Right cardiac atrium (tissue), 5 donors: ENCODE measurements at regions of chr21 and their contacts with region 1.

Region 1: DNA sequence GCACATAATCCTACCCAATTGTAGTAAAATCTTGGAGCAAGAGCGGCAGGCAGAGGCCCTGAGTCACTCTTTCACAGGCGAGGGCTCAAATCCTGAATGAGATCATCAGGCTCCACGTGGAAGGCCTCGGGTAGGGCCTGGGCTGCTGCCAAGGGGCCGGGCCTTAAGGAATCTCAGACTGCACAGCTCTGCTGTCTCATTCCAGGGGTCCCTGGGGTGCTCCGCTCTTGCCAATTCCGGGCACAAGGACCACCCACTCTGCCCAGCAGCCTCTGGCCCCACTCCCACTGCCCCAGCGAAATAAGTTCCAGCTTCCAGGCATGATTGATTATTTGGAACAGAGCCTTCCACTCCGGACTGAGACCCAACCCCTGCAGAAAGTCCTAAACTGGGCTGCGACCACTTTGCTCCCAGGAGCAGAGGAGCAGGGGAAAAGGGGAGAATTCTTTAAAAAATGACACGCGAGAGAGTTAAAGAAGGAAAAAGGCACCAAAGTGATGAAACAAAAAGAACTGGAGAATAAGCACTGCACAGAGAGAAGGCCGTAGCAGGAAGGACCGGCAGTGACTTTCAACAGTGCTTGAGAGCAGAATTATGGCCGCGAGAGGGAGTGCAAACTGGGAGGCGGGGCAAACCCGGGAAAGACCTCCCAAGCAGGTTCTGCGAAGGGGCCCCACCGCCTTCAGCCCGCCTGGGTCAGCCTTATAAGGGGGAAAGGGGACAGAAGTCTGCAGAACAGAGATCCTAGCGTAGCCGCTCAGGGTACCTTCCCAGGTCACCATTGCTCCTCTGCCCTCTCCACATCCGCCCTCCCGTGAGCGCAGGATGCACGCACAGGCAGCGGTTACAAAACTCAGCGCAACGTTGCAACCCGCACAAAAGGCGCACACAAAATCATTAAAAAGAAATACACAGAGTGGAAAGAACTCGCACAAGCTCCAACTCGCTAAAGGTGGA is 2.0 kb downstream of the ADAMTS1 start:
- DNase-seq: peak; percentile 94 to 98 (median 97)
- ATAC-seq: peak; percentile 50 to 67
- H3K4me3 ChIP-seq: peak overlapping the region; percentile 77
- H3K27ac ChIP-seq: peak overlapping the region; percentile 95
- H3K4me1 ChIP-seq: peaks cover 6% of the 10 kb centered on the region
- H3K27me3 ChIP-seq: no peaks in the 10 kb centered on the region

Region 2: DNA sequence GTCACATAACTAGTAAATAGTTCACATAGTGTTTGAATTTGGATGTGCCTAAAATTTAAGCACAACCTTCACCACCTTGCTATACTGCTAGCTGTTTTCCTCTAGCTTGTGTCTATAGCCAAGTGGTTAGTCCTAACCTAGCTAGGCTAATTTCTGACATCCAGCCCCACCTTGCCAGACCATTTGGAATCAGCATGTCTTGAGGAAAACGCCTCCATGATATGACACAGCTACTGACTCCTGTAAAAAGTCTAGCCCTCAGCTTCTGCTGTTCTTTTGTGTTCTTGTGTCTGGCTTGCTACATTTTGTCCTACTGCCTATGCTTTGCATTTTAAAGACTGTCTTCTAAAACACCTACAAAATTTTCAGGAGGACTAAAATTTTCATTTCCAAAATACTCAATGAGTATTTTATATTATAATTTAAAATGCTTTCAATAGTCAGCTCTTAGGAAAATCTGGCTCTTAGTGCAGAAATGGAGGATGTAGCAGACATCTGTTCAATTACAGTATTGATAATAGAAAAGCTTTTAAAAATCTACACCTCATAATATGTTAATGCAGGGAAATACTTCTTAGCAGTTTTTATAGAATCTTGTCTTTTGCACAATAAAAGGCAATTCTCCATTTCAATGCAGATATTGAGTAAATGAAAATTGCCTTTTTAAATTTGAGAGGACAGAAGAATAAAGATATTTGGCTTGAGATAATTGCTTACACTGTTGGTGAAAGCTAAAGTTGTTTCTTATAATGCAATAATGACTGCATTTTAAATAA is 511.9 kb before region 1 on chr21:
- intact Hi-C with region 1: no loop called
- DNase-seq: no peak
- ATAC-seq: no peak
- H3K4me3 ChIP-seq: no peak overlapping the region
- H3K27ac ChIP-seq: no peak overlapping the region
- H3K4me1 ChIP-seq: no peaks in the 10 kb centered on the region
- H3K27me3 ChIP-seq: no peaks in the 10 kb centered on the region

Region 3: GRCh38 chr21:26769613-26770188 is 73.6 kb before region 1 on chr21:
- intact Hi-C with region 1: loop called in 3 of 4 experiments (anchors 5 to 10 kb)
- DNase-seq: no peak
- ATAC-seq: no peak
- H3K4me3 ChIP-seq: no peak overlapping the region
- H3K27ac ChIP-seq: no peak overlapping the region
- H3K4me1 ChIP-seq: no peaks in the 10 kb centered on the region
- H3K27me3 ChIP-seq: no peaks in the 10 kb centered on the region

Region 4: DNA sequence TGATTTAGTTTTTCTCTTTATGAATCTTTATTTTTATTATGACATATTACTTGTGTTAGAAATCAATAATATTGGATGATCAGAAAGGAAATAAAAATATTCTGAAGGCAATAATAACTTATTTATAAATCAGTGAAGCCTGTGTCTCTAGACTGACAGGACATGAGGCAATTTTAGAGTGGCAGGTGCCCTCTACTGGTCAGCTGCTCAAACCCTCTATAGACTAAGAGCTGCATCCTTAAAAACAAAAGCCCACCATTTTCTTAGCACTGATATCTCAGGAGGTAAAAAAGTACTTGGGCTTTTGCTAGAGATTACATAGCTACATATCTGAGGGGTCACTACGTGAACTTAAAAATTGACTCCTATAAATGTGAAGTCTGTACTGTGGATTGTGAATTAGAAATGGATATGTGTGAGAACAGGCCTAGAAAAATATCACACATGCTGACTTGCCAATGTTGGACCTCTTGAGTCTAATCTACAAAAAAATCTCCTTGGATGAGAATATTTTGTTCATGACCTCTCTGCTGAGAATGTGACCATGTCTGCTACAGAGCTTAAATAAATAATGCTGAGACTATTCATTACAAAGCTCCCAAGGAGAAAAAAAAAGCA is 721.5 kb after region 1 on chr21:
- intact Hi-C with region 1: loop called in 1 of 4 experiments (anchors 10 kb)
- DNase-seq: peak; percentile 39 to 61 (median 59)
- ATAC-seq: peak; percentile 72 to 80
- H3K4me3 ChIP-seq: no peak overlapping the region
- H3K27ac ChIP-seq: no peak overlapping the region
- H3K4me1 ChIP-seq: peaks cover under 1% of the 10 kb centered on the region
- H3K27me3 ChIP-seq: no peaks in the 10 kb centered on the region

Region 5: DNA sequence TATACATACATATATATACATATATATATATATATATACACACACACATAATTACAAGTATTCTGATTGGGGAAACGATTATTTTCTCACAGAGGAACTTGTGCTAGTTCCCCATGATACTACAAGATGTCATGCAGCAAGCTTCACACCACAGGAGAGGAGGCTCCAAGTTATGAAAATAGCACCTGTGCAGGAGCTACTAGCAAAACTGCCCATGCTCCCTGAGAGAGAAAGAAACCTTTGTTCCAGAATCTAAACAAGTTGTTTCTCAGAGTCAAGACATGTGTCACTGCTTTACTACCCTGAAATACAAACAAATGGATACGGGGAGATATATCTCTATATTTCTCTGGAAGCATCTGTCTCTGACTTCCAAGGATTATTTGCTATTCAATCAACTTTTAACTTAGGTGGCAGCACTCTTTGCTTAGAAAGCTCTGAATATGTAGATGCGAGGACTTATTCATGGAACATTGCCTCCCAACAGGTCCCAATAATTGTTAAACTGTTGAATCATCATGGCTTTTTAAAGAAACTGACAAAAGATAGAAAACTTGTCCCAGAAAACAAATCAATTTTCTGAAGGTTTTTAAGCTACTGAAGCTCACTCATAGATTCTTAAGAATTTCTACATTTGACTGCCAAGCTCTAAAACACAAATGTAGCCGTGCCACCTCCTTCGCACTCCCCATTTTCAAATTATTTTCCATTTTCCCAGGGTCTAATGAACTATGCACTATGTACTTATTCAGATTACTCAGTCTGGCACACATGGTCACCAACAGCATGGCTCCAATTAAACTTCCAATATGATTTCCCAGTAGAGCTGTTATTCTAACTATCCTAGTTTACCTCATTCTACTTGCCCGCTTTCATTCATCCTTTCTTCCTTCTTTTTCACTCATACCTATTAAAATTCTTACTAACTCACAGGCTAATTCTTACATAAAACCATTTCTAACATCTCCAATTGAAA is 1220.3 kb after region 1 on chr21:
- intact Hi-C with region 1: loop called in 1 of 4 experiments (anchors 10 kb)
- DNase-seq: no peak
- ATAC-seq: no peak
- H3K4me3 ChIP-seq: no peak overlapping the region
- H3K27ac ChIP-seq: no peak overlapping the region
- H3K4me1 ChIP-seq: no peaks in the 10 kb centered on the region
- H3K27me3 ChIP-seq: no peaks in the 10 kb centered on the region